Dendritic cell treated with granulocyte-macrophage colony-stimulating factor and Interleukin-4, amounts not matched to agents 40 ng/mL and 50 ng/mL, for 4 days (primary cell): ENCODE measurements at regions of chr7 and their contacts with region 1.

Region 1: DNA sequence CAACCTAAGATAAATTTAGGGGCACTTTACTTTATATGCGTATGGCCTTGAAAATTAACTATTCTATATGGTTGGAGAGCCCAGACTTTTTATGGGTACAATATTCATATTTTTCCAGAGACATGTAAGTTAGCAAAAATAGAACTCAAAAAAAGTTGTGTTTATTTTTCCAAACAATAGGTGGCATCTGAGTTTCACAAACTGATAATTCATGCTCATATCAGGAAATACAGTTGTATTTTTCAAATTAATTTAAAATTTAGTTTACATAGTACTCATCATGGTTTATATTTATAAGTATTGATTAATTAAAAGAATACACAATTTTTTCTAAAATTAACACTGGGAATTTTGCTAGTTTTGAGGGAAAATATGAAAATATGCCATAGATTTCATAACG is 34.6 kb downstream of the ANKRD7 start:
- H3K4me3 Mint-ChIP-seq: no peak overlapping the region
- H3K27ac Mint-ChIP-seq: no peak overlapping the region
- H3K4me1 Mint-ChIP-seq: no peaks in the 10 kb centered on the region
- H3K27me3 Mint-ChIP-seq: peaks cover 18% of the 10 kb centered on the region

Region 2: DNA sequence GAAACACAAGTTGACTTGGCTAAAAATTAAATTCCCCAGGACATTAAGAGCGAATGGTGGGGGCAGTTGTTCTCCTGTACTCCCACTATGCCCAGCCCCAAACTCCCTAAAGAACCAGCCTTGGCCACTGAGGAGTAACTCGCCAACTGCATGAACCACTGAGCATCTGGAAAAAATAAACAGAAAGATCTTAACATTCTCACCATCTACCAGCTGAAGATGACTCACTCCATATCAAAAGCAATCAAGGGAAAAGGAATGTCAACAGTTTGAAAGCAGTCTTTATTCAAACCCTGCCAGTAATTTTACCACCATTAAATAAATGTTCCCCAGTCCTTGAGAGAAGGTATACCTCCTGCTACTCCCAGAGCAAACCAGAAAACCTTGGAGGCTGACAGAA is 431.3 kb before region 1 on chr7:
- intact Hi-C with region 1: no loop called
- H3K4me3 Mint-ChIP-seq: no peak overlapping the region
- H3K27ac Mint-ChIP-seq: peak overlapping the region; percentile 4
- H3K4me1 Mint-ChIP-seq: peaks cover 36% of the 10 kb centered on the region
- H3K27me3 Mint-ChIP-seq: peaks cover 3% of the 10 kb centered on the region

Region 3: GRCh38 chr7:117993377-117994003 is 265.6 kb before region 1 on chr7:
- intact Hi-C with region 1: no loop called
- H3K4me3 Mint-ChIP-seq: no peak overlapping the region
- H3K27ac Mint-ChIP-seq: no peak overlapping the region
- H3K4me1 Mint-ChIP-seq: no peaks in the 10 kb centered on the region
- H3K27me3 Mint-ChIP-seq: no peaks in the 10 kb centered on the region

Region 4: DNA sequence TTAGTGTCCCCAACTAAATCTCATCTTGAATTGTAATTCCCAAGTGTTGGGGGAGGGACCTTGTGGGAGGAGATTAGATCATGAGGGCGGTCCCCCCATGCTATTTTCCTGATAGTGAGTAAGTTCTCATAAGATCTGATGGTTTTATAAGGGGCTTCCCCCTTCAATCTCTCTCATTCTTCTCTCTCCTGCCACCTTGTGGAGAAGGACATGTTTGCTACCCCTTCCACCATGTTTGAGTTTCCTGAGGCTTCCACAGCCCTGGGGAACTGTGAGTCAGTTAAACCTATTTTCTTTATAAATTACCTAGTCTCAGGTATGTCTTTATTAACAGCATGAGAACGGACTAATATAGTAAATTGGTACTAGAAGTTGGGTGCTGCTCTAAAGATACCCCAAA is 331.0 kb after region 1 on chr7:
- intact Hi-C with region 1: loop called (anchors 2 kb)
- H3K4me3 Mint-ChIP-seq: no peak overlapping the region
- H3K27ac Mint-ChIP-seq: no peak overlapping the region
- H3K4me1 Mint-ChIP-seq: no peaks in the 10 kb centered on the region
- H3K27me3 Mint-ChIP-seq: no peaks in the 10 kb centered on the region

Region 5: GRCh38 chr7:119175911-119176627 is 917.0 kb after region 1 on chr7:
- intact Hi-C with region 1: loop called (anchors 1 kb)
- H3K4me3 Mint-ChIP-seq: no peak overlapping the region
- H3K27ac Mint-ChIP-seq: no peak overlapping the region
- H3K4me1 Mint-ChIP-seq: no peaks in the 10 kb centered on the region
- H3K27me3 Mint-ChIP-seq: no peaks in the 10 kb centered on the region

Region 6: DNA sequence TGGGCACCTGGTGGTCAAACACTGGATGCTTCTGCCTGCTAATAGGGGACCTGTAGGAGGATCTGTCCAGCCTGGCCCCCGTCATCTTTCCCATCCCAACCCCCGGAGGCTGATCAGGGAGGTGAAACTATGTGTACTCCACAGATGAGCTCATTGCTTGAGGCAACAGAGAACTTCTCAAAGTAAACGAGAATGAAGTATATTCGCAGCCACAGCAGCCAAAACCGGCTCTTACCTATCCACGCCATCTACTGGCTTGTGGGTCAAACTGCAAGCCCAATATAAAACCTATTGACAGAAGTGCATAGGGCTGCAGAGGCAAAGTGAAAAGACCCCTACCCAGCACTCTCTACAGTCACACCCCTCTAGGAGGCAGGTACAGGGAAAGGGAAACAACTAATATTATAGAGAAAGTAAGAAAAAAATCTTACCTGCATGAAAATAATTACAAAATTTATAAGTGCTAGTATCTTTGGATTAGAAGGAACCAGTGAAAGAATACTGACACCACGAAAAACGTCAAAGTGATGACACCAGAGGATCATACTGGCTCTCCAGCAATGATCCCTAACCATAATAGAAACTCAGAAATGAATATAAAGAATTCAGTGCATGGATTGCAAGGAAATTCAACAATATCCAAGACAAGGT is 938.9 kb after region 1 on chr7:
- intact Hi-C with region 1: loop called (anchors 5 kb)
- H3K4me3 Mint-ChIP-seq: no peak overlapping the region
- H3K27ac Mint-ChIP-seq: no peak overlapping the region
- H3K4me1 Mint-ChIP-seq: no peaks in the 10 kb centered on the region
- H3K27me3 Mint-ChIP-seq: no peaks in the 10 kb centered on the region